GM23248 (cell line): ENCODE measurements at regions of chr18 and their contacts with region 1.

Region 1: DNA sequence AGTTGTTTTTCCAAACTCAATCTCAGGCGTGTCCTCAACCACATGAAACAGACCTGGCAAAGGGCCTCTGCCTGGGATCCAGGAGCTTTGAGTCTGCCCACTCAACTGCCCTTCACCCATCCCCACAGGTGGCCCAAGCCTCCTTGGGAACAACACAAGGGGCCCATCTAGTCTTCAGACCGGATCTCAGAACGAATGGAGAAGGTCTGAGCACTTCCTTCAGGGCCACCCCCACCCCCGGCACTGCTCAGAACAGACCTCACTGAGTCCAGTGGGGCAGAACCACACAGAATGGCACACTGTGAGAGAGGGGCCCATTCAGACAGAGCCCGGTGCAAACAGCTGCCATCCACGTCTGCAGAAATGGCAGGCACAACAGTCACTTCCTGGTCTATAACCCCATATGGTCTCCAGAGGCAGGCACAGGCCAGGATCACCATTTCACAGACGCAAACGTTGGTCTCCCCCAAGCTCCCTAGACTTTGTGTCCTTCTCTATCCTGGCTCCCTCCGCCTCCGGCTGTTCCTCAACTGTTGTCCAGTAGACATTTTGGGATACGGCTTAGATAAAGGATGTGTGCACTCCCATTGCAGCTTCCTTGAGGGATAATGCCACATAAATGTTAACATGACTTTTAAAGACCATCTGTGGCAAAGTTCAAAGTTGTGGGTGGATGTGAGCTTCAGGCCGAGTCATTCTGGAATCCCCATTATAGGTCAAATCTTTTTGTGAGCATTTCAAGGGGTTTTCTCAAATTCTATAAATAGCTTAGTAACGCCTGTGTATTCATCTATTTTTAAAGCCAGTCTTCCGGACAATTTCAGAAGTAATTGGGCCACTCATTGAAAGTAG is 149.7 kb downstream of the SMAD7 start:
- DNase-seq: peak; percentile 63
- H3K4me3 ChIP-seq: no peak overlapping the region
- H3K27ac ChIP-seq: peak overlapping the region; percentile 60
- H3K4me1 ChIP-seq: peaks cover 14% of the 10 kb centered on the region
- H3K27me3 ChIP-seq: no peaks in the 10 kb centered on the region

Region 2: DNA sequence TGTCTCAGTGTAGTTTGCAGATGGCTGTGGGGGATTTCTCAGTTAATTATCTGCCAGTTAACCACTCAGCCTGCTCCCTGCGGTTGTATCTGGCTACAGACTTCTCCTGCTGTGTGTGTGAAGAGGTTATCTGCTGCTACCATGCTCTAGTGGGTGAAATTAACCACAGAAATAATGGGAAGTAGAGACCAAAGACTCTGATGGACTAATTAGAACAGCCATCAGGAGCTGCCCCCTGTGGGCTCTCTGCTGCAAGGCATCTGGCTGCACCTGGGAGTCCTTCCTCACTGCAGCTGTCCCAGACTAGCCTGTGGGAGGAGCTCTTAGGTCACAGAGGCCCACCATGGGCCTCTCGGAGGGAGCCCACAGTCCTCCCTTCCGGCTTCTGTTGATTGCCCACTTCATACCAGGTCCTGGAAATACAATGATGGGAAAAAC is 195.7 kb before region 1 on chr18:
- in situ Hi-C with region 1: no loop called
- DNase-seq: no peak
- H3K4me3 ChIP-seq: no peak overlapping the region
- H3K27ac ChIP-seq: no peak overlapping the region
- H3K4me1 ChIP-seq: peaks cover 32% of the 10 kb centered on the region
- H3K27me3 ChIP-seq: no peaks in the 10 kb centered on the region

Region 3: GRCh38 chr18:48742706-48743475 is 58.2 kb before region 1 on chr18:
- in situ Hi-C with region 1: loop called (anchors 10 kb)
- DNase-seq: peak; percentile 92
- H3K4me3 ChIP-seq: peak overlapping the region; percentile 53
- H3K27ac ChIP-seq: peak overlapping the region; percentile 79
- H3K4me1 ChIP-seq: peaks cover 42% of the 10 kb centered on the region
- H3K27me3 ChIP-seq: no peaks in the 10 kb centered on the region

Region 4: DNA sequence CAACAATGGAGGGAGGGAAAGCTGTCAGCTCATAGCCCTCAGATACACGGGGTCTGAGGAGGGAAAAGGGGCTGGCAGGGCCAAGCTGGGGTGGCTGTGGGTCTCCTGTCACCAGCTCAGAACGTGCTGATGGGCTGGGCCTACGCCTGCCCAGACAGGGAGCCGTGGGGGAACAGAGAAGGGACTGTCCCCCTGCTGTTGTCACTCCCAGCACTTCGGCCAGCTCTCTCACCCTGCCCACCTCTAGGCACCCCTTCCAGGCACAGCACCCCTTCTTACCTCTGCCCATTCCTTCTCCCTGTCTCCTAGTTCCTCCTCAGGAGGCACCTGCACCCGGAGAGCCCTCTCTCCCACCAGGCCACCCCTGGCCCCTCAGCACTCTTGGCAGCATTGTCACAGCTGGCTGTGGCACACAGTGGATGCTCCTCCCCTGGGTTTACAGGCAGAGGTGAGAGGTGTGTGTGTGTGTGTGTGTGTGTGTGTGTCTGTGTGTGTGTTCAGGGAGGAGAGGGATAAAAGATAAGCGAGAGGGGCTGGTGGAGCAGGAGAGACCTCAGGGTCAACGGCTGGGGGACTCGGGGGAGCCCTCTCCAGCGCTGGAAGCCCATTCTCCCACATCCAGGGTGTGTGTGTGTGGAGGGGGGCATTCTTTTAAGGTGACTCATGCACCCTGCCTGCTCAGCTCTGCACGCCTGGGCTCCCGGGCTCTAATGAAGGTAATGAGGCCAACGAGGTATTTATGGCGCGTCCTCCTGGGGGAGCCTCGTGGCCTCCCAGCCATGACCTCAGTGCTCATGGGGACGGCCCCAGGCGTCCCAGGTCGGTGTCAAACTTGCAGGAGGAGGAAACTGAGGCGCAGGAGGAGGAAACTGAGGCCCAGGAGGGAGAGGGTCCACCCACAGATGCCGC is 215.8 kb after region 1 on chr18:
- in situ Hi-C with region 1: no loop called
- DNase-seq: peak; percentile 84
- H3K4me3 ChIP-seq: no peak overlapping the region
- H3K27ac ChIP-seq: no peak overlapping the region
- H3K4me1 ChIP-seq: peaks cover 10% of the 10 kb centered on the region
- H3K27me3 ChIP-seq: no peaks in the 10 kb centered on the region